Upper lobe of right lung (tissue), 1 donor: ENCODE measurements at regions of chr2 and their contacts with region 1.

Region 1: GRCh38 chr2:117832905-117833613 is 18.6 kb downstream of the DDX18 start:
- DNase-seq: no peak
- ATAC-seq: no peak
- H3K4me3 ChIP-seq: no peak overlapping the region
- H3K27ac ChIP-seq: no peak overlapping the region
- H3K4me1 ChIP-seq: peaks cover 4% of the 10 kb centered on the region
- H3K27me3 ChIP-seq: no peaks in the 10 kb centered on the region
- CTCF ChIP-seq: no peak

Region 2: GRCh38 chr2:118003396-118003824 is 170.4 kb after region 1 on chr2:
- intact Hi-C with region 1: loop called (anchors 5 kb)
- DNase-seq: no peak
- ATAC-seq: peak; percentile 99
- H3K4me3 ChIP-seq: no peak overlapping the region
- H3K27ac ChIP-seq: no peak overlapping the region
- H3K4me1 ChIP-seq: no peaks in the 10 kb centered on the region
- H3K27me3 ChIP-seq: no peaks in the 10 kb centered on the region
- CTCF ChIP-seq: peak; percentile 84